Psoas muscle (tissue), 8 donors: ENCODE measurements at regions of chr6 and their contacts with region 1.

Region 1: DNA sequence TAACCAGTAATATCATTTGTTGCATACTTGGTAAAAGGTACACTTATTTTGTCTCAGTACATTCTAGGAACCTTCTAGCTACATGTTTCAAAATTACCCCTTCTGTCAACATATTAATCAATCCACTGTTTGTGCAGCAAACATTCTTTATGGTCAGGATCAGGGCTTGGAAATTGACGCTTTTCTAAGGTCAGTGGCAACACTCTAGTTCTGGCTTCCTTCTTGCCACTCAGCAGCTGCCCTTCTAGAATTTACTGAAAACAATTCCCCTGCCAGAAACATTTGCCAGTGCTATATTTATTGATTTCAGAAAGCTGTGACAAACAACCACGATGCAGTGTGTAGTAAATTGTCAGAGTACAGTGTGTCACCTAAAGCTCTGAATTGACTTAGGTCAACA is 84.7 kb upstream of the FBXL4 start:
- DNase-seq: no peak
- ATAC-seq: peak in 2 of 4 donors; percentile 55 to 84
- H3K4me3 ChIP-seq: peak overlapping the region; percentile 35
- H3K27ac ChIP-seq: peak overlapping the region; percentile 83
- H3K4me1 ChIP-seq: peaks cover 11% of the 10 kb centered on the region
- H3K27me3 ChIP-seq: no peaks in the 10 kb centered on the region
- CTCF ChIP-seq: no peak

Region 2: DNA sequence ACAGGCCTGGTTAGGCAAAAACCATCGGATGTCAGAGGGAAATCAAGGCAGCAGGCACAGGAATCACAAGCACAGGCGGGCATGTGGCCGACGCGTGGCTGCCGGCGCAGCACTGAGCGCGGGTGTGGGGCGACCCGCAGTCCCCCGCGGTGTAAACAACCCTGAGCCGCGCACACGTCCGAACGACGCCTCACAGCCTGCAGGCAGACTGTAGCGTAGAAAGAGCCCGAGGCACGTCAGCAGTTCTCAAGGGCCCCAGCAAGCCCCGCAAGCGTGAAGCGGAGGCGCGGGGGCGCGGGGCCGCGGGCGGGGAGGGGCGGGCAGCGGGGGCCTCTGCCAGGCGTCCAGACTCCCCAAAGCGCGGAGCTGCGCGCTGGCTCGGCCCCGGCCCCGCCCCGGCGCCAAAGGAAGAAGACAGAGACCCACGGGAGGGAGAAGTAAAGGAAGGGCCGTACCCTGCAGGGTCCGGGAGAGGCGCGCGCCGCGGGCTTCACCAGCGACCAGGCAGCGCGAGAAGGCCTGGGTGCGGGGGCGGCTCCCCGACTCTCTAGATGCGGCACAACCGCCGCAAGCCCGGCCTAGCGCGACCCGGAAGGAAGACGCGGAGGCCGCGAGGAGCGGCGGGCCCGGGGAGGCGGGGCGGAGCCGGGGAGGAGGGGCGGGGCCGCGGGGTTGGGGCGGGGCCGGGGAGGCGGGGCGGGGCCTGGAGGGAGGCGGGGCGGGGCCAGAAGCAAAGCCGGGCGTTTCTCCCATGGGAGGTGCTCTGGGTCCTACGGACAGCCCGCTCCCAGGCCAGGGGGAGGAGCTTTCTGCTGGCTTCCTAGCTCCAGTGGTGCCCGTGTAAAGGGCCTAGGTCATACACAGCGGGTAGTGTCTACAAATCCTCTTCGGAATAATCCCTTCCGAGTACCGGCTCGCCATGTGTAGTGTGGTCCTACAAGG is 84.8 kb before region 1 on chr6 and contains the start of gene FBXL4:
- intact Hi-C with region 1: loop called in 1 of 2 experiments (anchors 5 kb)
- DNase-seq: peak; percentile 82 to 92
- ATAC-seq: peak; percentile 94 to 97 (median 96)
- H3K4me3 ChIP-seq: peak within 1 kb of the TSS; percentile 88
- H3K27ac ChIP-seq: peak within 1 kb of the TSS; percentile 97
- H3K4me1 ChIP-seq: peaks cover 18% of the 10 kb centered on the region
- H3K27me3 ChIP-seq: no peaks in the 10 kb centered on the region
- CTCF ChIP-seq: no peak
- total RNA-seq, gene FBXL4: 7.7 to 15.5 (median 13.3) TPM

Region 3: DNA sequence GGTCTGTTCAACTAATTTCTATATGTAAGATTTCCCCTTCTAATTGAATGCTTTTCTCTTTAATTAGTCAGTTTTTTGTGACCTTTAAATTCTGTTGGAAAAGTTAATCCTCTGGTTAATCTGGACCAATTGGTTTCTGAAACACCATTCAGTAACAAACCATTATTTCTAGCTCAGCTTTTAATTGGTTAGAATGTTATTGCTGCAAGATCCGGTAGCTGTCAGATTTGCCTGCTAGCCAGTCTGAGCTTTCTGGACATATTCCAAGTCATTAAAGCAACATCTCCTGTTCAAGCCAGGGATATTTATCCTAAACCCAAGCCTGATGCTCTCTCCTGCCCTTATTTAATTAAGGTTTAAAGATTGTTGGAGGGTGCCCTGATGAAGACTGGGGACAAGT is 29.6 kb before region 1 on chr6:
- intact Hi-C with region 1: no loop called
- DNase-seq: no peak
- ATAC-seq: no peak
- H3K4me3 ChIP-seq: no peak overlapping the region
- H3K27ac ChIP-seq: no peak overlapping the region
- H3K4me1 ChIP-seq: no peaks in the 10 kb centered on the region
- H3K27me3 ChIP-seq: no peaks in the 10 kb centered on the region
- CTCF ChIP-seq: no peak

Region 4: DNA sequence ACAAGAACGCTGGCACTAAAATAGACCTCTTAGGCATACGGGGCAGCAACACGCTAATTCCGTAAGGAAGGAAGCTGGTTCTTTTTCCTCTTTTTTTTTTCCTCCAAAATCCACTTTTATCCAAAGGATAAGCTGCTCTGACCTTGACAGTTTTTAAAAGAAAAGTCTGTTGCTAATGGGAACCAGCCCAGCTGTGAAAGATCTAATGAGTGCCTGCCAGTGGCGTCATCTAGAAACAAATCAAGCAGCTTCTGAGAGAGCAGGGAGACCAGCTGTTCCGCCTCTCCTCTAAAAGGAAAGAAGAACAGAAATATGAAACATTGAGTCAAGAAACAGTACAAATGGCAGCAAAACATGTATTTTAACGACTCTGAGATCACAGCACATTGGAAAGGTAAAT is 238.4 kb after region 1 on chr6:
- intact Hi-C with region 1: no loop called
- DNase-seq: no peak
- ATAC-seq: no peak
- H3K4me3 ChIP-seq: no peak overlapping the region
- H3K27ac ChIP-seq: no peak overlapping the region
- H3K4me1 ChIP-seq: no peaks in the 10 kb centered on the region
- H3K27me3 ChIP-seq: peaks cover 0 to 2% (median 0%) of the 10 kb centered on the region in 3 donors
- CTCF ChIP-seq: no peak